ENCODE measurements at regions of chr7 and their contacts with region 1.

Region 1: GRCh38 chr7:156240532-156240931 is 400.0 kb upstream of the RNF32 start:
- DNase-seq: no peak
- H3K4me3 ChIP-seq: no peak overlapping the region
- CTCF ChIP-seq: no peak

Region 2: DNA sequence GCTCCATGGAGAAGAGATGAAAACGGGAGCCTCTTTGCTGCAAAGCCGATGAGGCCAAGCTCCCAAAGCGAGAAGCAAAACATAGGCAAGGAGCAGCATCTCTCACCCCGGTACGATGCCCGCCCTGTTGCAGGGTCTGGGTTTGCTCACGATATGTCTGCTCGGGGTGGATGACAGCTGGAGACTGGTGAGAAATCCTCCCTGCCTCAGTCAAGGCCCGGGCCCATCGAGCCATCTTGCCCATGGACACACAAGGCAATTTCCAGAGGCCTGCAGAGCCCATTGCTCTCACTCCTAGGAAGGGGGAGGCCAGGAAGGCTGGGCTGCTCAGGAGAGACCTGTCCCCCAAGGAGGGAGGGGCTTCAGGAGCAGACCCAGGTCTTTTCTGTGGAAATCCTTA is 36.6 kb before region 1 on chr7:
- in situ Hi-C with region 1: loop called (anchors 5 kb)
- DNase-seq: no peak
- H3K4me3 ChIP-seq: no peak overlapping the region
- CTCF ChIP-seq: no peak

Measured in astrocyte of the cerebellum (primary cell).